WTC11 (cell line): ENCODE measurements at regions of chr7 and their contacts with region 1.

Region 1: DNA sequence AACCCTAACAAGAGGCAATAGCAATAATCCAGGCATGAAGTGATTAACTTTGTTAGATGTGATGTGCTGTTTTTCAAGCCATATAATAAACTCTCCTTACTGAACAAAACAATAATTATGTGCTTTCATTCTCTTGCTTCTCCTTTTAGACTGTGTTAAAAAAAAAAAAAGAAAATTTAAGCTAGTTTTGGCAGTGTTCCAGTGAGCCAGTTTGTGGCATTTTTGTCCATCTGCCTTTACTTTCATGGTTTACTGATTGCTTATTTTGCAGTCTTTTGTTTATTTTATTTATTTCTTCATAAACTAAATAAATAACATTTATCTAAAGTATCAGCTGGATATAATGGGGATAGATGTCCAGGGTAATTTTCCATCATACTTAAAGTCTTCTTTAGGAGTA is 625.3 kb downstream of the CNTNAP2 start:
- DNase-seq: no peak
- ATAC-seq: no peak
- H3K4me3 Mint-ChIP-seq: no peak overlapping the region
- H3K27ac Mint-ChIP-seq: no peak overlapping the region
- H3K4me1 Mint-ChIP-seq: peaks cover 8% of the 10 kb centered on the region; the same call in 1 of the 2 replicates
- H3K27me3 Mint-ChIP-seq: no peaks in the 10 kb centered on the region
- CTCF ChIP-seq: no peak

Region 2: GRCh38 chr7:147279964-147280374 is 538.1 kb after region 1 on chr7:
- CTCF ChIA-PET with region 1: no interaction called
- POLR2A ChIA-PET with region 1: interaction called, 10 read pairs
- DNase-seq: no peak
- ATAC-seq: no peak; the same call in 1 of the 2 replicates
- H3K4me3 Mint-ChIP-seq: no peak overlapping the region
- H3K27ac Mint-ChIP-seq: no peak overlapping the region
- H3K4me1 Mint-ChIP-seq: peaks cover 6% of the 10 kb centered on the region
- H3K27me3 Mint-ChIP-seq: no peaks in the 10 kb centered on the region; the same call in 1 of the 2 replicates
- CTCF ChIP-seq: no peak